Activated CD4-positive, alpha-beta T cell treated with anti-CD3 and anti-CD28 coated beads, Interleukin-2, amount 10 ng/mL, durations not matched to agents 24 days and 14 days (primary cell): ENCODE measurements at regions of chr7 and their contacts with region 1.

Region 1: DNA sequence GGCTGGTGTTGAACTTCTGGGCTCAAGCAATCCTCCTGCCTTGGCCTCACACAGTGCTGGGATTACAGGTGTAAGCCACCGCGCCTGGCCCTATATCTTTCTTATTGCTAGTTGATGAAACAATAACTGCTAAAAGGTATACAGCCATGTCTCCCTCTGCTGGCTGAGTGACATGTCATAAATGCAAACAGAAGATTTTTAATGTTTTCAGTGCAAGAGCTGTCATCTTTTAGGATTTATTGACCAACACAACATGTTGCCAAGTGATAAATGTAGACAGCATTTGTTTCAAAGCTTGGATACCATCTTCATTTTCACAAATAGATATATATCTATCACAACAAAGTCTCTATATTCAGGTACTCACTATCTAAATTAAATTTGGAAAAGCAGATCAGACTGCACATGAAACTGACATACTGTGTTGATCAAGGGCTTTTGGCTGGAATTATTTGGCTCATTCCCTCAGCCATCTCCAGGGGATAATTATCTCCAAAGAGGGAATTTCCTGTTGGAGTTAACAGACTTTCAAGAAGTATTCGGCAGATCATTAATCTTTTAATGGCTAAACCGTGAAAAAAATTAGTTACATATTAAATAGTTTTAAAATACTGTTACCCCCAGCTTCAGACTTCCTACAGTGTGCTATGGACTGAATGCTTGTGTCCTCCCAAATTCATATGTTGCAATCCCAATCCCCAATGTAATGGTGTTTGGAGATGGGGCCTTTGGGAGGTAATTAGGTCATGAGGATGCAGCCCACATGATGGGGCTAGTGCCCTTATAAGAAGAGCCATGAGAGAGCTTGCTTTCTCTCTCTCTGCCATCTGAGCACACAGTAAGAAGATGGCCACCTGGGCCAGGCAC is 41.3 kb upstream of the SRPK2 start:
- DNase-seq: peak; percentile 83
- H3K4me3 Mint-ChIP-seq: no peak overlapping the region
- H3K27ac Mint-ChIP-seq: no peak overlapping the region
- H3K4me1 Mint-ChIP-seq: peaks cover 6% of the 10 kb centered on the region
- H3K27me3 Mint-ChIP-seq: no peaks in the 10 kb centered on the region

Region 2: GRCh38 chr7:105346593-105347322 is 83.2 kb before region 1 on chr7:
- intact Hi-C with region 1: loop called (anchors 2 kb)
- DNase-seq: peak; percentile 81
- H3K4me3 Mint-ChIP-seq: peak overlapping the region; percentile 56
- H3K27ac Mint-ChIP-seq: peak overlapping the region; percentile 60
- H3K4me1 Mint-ChIP-seq: peaks cover 42% of the 10 kb centered on the region
- H3K27me3 Mint-ChIP-seq: no peaks in the 10 kb centered on the region